ENCODE measurements at regions of chr16 and their contacts with region 1.

Region 1: GRCh38 chr16:48164907-48165726 is 9.3 kb upstream of the ABCC12 start:
- DNase-seq: peak; percentile 81
- H3K27ac ChIP-seq: no peak overlapping the region
- CTCF ChIP-seq: peak; percentile 82

Region 2: DNA sequence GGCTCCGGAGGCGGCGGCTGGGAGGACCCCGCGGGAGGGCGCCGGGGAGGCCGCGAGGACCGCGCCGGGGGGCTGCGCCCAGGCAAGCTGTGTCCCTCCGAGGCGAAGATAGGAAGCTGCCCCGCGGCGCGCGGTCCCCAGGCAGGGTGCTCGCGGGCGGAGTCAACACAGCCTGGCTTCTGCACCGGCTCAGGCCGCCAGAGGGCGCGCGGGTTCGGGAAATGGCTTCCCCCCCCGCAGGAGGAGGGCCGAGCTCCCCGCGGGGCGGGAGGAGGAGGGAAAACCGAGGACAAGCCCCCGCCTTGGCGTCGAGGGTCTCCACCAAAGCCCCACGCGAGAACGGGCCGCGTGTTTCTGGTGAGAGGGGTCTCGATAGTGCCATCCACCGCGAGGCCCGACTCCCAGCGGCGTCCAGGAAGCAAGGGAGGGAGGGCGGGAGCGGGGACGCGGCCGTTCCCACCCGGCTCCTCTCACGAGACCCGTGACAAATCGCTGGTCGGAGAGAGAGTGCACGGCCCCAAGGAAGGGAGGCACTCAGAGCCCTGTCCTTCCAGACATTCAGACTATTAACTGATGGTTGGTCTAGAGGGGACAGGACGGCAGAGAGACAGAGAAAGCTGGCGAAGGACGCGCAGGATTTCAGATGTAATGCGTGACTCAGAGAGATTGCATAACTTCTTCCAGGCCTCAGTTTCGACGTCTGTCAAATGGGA is 1127.2 kb before region 1 on chr16:
- CTCF ChIA-PET with region 1: interaction called, 11 read pairs
- POLR2A ChIA-PET with region 1: no interaction called
- DNase-seq: peak; percentile 90
- H3K27ac ChIP-seq: peak overlapping the region; percentile 33; the same call in 1 of the 2 replicates
- CTCF ChIP-seq: peak; percentile 90

Region 3: DNA sequence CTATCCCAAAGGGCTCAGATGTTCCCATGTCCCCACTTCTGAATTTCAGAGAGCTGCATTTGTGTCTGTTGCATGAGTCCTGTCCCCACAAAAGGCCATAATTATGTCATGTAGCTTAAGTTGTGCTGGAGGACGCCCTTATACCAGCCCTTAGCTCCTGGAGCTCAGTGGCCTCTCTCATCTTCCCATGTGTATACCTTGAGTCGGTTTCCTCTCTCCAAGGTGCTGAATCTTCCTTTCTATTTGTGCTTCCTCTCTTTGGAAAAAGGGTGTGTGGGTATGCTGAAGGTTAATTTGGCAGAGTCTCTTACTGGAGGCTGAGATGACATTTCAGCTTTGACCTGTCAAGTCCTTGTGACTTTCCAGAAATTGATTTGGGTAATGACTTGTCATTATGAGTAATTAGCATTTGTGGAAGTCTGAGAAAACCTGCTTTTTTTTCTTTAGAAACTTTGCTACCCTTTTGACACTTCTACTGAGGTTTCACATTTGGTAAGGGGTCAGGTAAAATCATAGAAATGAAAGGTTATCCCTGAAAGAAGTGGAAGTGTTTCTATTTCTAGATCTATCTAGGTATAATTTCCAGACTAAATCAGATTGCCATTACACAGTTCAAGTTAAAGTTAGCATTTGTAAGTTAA is 194.7 kb before region 1 on chr16:
- CTCF ChIA-PET with region 1: no interaction called
- POLR2A ChIA-PET with region 1: no interaction called
- DNase-seq: peak; percentile 34
- H3K27ac ChIP-seq: no peak overlapping the region
- CTCF ChIP-seq: no peak

Region 4: DNA sequence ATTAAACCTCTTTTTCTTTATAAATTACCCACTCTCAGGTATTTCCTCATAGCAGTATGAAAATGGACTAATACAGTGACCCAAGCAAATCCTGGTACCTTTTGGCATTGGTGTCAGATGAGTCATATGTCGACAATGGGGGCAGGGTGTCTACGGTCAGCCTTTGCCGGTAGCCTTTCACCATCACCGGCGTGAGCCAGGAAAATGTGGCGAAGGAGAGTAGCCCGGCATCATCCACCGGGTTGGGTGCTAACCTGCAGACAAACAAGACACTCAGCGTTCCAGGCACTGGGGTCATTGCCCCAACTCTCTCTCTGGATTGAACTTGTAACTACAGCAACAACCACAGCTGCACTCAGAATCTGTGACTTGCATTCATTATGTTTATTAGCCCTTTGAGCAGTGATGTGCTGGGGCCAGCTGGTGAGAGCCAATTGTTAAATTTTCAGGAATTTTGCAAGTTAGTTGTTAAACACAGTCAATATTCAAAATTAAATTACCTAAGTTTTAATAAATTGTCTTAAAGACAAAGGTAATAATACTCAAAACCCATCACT is 21.2 kb before region 1 on chr16:
- CTCF ChIA-PET with region 1: no interaction called
- POLR2A ChIA-PET with region 1: no interaction called
- DNase-seq: no peak
- H3K27ac ChIP-seq: no peak overlapping the region
- CTCF ChIP-seq: no peak

Region 5: GRCh38 chr16:48250520-48251278 is 85.6 kb after region 1 on chr16:
- CTCF ChIA-PET with region 1: no interaction called
- POLR2A ChIA-PET with region 1: no interaction called
- DNase-seq: no peak
- H3K27ac ChIP-seq: no peak overlapping the region
- CTCF ChIP-seq: no peak

Region 6: DNA sequence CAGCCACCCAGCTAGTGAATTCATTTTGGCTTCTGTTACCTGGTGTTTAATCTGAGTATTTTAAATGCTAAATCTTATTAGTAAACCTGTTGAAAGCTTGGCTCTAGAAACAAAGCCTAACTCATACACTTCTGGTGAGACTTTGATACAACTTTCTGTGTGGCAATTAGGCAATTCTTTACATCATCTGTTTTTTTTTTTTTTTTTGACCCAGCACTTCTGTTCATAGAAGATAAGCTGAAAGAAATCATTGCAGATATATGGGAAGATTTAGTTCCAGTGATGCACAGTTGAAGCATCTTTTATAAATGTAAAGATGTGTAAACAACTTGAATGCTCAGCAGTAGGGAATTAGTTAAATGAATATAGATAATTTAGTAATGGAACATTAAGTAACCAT is 103.9 kb after region 1 on chr16:
- CTCF ChIA-PET with region 1: no interaction called
- POLR2A ChIA-PET with region 1: no interaction called
- DNase-seq: no peak
- H3K27ac ChIP-seq: no peak overlapping the region
- CTCF ChIP-seq: no peak